Activated CD8-positive, alpha-beta T cell treated with anti-CD3 and anti-CD28 coated beads, Interleukin-2, amount 10 ng/mL, durations not matched to agents 7 days and 5 days (primary cell): ENCODE measurements at regions of chr19 and their contacts with region 1.

Region 1: GRCh38 chr19:29873024-29873800 is 61.4 kb downstream of the CCNE1 start:
- DNase-seq: peak; percentile 68
- ATAC-seq: peak; percentile 86
- H3K4me3 Mint-ChIP-seq: peak overlapping the region; percentile 42
- H3K27ac Mint-ChIP-seq: no peak overlapping the region
- H3K4me1 Mint-ChIP-seq: peaks cover 16% of the 10 kb centered on the region
- H3K27me3 Mint-ChIP-seq: peaks cover 7% of the 10 kb centered on the region

Region 2: GRCh38 chr19:29724102-29724641 is 149.0 kb before region 1 on chr19:
- CTCF ChIA-PET with region 1: interaction called, 24 read pairs
- POLR2A ChIA-PET with region 1: no interaction called
- DNase-seq: peak; percentile 55
- ATAC-seq: peak; percentile 82
- H3K4me3 Mint-ChIP-seq: peak overlapping the region; percentile 59
- H3K27ac Mint-ChIP-seq: no peak overlapping the region
- H3K4me1 Mint-ChIP-seq: peaks cover 18% of the 10 kb centered on the region
- H3K27me3 Mint-ChIP-seq: peaks cover 26% of the 10 kb centered on the region

Region 3: GRCh38 chr19:29731331-29731850 is 141.8 kb before region 1 on chr19:
- CTCF ChIA-PET with region 1: interaction called, 28 read pairs
- POLR2A ChIA-PET with region 1: interaction called, 3 read pairs
- DNase-seq: no peak
- ATAC-seq: no peak
- H3K4me3 Mint-ChIP-seq: no peak overlapping the region
- H3K27ac Mint-ChIP-seq: no peak overlapping the region
- H3K4me1 Mint-ChIP-seq: no peaks in the 10 kb centered on the region
- H3K27me3 Mint-ChIP-seq: peaks cover 23% of the 10 kb centered on the region

Region 4: DNA sequence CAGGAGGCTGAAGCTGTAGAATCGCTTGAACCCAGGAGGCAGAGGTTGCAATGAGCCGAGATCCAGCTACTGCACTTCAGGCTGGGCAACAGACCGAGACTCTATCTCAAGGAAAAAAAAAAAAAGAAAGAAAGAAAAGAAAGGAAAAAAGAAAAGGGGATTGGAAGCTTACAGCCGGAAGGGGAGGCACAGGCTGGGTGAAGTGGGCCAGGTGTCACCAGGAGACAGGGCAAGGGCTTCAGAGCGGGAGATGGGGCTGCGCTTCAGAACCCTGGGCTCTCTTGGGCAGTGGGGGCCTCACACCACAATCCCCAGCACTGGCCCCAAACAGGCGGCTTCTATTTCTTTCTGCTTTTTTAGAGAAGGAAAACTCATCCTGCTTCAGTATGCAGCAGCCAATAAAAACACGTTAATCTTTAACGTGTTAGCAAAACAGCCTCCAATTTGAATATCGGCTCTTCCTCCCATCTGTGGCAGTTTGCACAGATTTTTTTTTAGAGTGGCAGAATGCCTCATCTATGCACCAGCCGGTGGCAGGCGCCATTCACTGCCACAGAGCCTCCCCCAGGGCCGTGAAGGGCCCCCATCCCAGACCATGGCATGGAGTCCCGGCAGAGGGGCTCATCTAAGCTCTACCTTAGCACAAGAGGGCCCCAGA is 111.5 kb before region 1 on chr19:
- CTCF ChIA-PET with region 1: interaction called, 43 read pairs
- POLR2A ChIA-PET with region 1: no interaction called
- DNase-seq: no peak
- ATAC-seq: no peak
- H3K4me3 Mint-ChIP-seq: no peak overlapping the region
- H3K27ac Mint-ChIP-seq: no peak overlapping the region
- H3K4me1 Mint-ChIP-seq: no peaks in the 10 kb centered on the region
- H3K27me3 Mint-ChIP-seq: no peaks in the 10 kb centered on the region

Region 5: GRCh38 chr19:29771708-29772414 is 101.4 kb before region 1 on chr19:
- CTCF ChIA-PET with region 1: interaction called, 10 read pairs
- POLR2A ChIA-PET with region 1: no interaction called
- DNase-seq: peak; percentile 31
- ATAC-seq: peak; percentile 43
- H3K4me3 Mint-ChIP-seq: no peak overlapping the region
- H3K27ac Mint-ChIP-seq: no peak overlapping the region
- H3K4me1 Mint-ChIP-seq: peaks cover 13% of the 10 kb centered on the region
- H3K27me3 Mint-ChIP-seq: no peaks in the 10 kb centered on the region

Region 6: DNA sequence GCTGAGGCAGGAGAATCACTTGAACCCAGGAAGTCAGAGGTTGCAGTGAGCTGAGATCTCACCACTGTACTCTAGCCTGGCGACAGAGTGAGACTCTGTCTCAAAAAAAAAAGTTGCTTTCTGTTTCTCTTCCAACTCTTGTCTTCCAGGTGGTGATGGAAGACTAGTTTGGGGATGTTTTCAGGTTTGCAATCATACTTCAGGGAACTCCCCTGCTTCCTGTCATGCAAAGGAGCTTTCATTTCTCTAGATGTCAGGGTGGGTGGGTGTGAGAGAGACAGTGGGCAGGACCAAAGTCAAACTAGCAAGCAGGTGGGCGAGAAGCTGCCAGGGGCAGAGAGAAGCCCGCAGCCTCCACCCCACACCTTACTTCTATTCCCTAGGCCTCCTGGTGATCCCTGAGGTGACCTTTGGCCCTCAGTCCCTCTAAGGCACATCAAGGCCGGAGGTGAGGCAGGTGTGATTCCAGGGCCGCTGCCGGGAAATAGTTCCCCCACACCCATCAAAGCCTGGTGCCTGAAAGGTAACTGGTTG is 35.7 kb before region 1 on chr19:
- CTCF ChIA-PET with region 1: interaction called, 13 read pairs
- POLR2A ChIA-PET with region 1: no interaction called
- DNase-seq: peak; percentile 51
- ATAC-seq: peak; percentile 77
- H3K4me3 Mint-ChIP-seq: peak overlapping the region; percentile 71
- H3K27ac Mint-ChIP-seq: peak overlapping the region; percentile 92
- H3K4me1 Mint-ChIP-seq: peaks cover 46% of the 10 kb centered on the region
- H3K27me3 Mint-ChIP-seq: peaks cover 3% of the 10 kb centered on the region

Region 7: DNA sequence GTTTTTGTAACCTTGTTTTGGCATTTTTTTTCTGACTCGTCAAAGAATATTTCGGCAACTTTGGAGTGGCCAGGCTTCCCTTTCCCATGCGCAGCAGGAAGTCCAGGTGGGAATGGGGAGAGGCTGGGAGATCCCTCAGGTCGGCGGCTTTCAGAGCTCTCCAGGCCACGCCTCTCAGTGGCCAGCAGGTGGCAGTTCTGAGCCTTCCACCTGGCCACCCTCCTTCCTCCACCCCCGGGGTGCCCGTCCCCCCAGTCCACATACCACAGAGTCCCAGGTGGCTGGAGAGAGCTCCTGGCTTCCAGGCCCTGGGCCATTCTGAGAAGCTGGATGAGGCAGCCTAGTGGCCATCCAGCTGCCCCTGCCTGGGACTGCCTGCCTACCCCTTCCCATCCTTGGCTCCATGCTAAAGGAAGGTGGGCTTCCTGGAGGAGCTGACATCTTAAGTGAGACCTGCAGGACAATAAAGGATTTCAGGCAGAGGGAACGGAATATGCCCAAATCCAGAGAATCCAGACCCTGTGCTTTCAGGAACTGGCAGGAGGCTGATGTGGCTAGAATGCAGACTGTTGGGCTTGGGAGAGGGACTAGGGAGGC is 15.1 kb before region 1 on chr19:
- CTCF ChIA-PET with region 1: interaction called, 32 read pairs
- POLR2A ChIA-PET with region 1: no interaction called
- DNase-seq: peak; percentile 54
- ATAC-seq: peak; percentile 81
- H3K4me3 Mint-ChIP-seq: no peak overlapping the region
- H3K27ac Mint-ChIP-seq: no peak overlapping the region
- H3K4me1 Mint-ChIP-seq: peaks cover 2% of the 10 kb centered on the region
- H3K27me3 Mint-ChIP-seq: peaks cover 6% of the 10 kb centered on the region

Region 8: GRCh38 chr19:29917911-29918310 is 44.7 kb after region 1 on chr19:
- CTCF ChIA-PET with region 1: no interaction called
- POLR2A ChIA-PET with region 1: no interaction called
- DNase-seq: no peak
- ATAC-seq: no peak
- H3K4me3 Mint-ChIP-seq: no peak overlapping the region
- H3K27ac Mint-ChIP-seq: no peak overlapping the region
- H3K4me1 Mint-ChIP-seq: no peaks in the 10 kb centered on the region
- H3K27me3 Mint-ChIP-seq: no peaks in the 10 kb centered on the region